ENCODE measurements at regions of chr12 and their contacts with region 1.

Region 1: GRCh38 chr12:22459838-22460490 is 84.4 kb downstream of the C2CD5 start:
- DNase-seq: no peak
- H3K4me3 Mint-ChIP-seq: no peak overlapping the region
- H3K27ac Mint-ChIP-seq: no peak overlapping the region
- H3K4me1 Mint-ChIP-seq: peaks cover 4% of the 10 kb centered on the region
- H3K27me3 Mint-ChIP-seq: no peaks in the 10 kb centered on the region

Region 2: GRCh38 chr12:22083167-22083566 is 376.8 kb before region 1 on chr12:
- CTCF ChIA-PET with region 1: interaction called, 19 read pairs
- POLR2A ChIA-PET with region 1: no interaction called
- intact Hi-C with region 1: loop called (anchors 1 kb)
- DNase-seq: no peak
- H3K4me3 Mint-ChIP-seq: no peak overlapping the region
- H3K27ac Mint-ChIP-seq: no peak overlapping the region
- H3K4me1 Mint-ChIP-seq: no peaks in the 10 kb centered on the region
- H3K27me3 Mint-ChIP-seq: no peaks in the 10 kb centered on the region

Region 3: GRCh38 chr12:22271023-22271422 is 188.9 kb before region 1 on chr12:
- CTCF ChIA-PET with region 1: no interaction called
- POLR2A ChIA-PET with region 1: no interaction called
- intact Hi-C with region 1: no loop called
- DNase-seq: no peak
- H3K4me3 Mint-ChIP-seq: no peak overlapping the region
- H3K27ac Mint-ChIP-seq: no peak overlapping the region
- H3K4me1 Mint-ChIP-seq: peaks cover 8% of the 10 kb centered on the region
- H3K27me3 Mint-ChIP-seq: no peaks in the 10 kb centered on the region

Region 4: GRCh38 chr12:22477166-22477893 is 17.4 kb after region 1 on chr12:
- CTCF ChIA-PET with region 1: interaction called, 52 read pairs
- POLR2A ChIA-PET with region 1: no interaction called
- intact Hi-C with region 1: no loop called
- DNase-seq: no peak
- H3K4me3 Mint-ChIP-seq: no peak overlapping the region
- H3K27ac Mint-ChIP-seq: peak overlapping the region; percentile 14
- H3K4me1 Mint-ChIP-seq: peaks cover 27% of the 10 kb centered on the region
- H3K27me3 Mint-ChIP-seq: no peaks in the 10 kb centered on the region